MCF 10A (cell line): ENCODE measurements at regions of chr19 and their contacts with region 1.

Region 1: DNA sequence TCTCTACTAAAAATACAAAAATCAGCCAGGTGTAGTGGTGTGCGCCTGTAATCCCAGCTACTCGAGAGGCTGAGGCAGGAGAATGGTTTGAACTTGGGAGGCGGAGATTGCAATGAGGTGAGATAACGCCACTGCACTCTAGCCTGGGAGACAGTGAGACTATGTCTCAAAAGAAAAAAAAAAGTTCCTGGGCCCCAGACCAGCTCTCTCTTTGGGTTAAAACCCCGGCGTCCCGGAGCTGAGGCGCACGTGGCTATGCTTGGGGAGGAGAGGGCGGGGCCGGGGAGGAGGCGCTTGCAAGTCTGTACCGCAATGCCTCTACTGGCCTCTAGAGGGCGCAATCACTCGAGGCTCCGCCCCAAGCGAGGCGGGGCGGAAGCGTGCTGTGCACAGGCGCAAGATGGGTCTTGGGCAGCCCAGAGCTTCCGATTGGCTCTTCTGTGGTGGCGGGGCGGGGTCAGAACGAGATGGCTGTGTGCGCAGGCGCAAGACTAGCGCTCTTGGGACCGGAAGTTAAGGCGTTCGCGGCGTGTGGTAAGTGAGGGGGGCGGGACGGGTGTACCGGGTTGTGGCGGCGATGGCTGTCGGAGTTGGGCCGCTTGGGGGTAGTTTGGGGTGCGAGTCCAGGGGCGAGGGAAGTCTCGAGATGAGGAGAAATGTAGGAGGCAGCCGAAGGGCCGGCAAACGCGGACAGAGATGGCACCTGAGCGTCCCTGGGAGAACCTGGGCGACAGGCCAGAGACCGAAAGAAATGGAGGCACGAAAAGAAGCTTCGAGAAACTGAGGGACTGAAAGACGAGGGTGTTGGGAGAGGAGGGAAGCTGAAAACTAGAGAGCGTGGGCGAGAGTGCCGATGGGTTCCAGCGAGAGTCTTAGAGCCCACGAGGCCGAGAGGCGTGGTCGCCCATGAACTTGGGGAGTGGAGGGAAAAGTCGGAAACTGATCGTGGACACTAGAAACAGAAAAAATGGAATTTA is at the start of gene DHX34:
- DNase-seq: peak; percentile 99
- H3K4me3 Mint-ChIP-seq: peak within 1 kb of the TSS; percentile 94
- H3K27ac Mint-ChIP-seq: peak within 1 kb of the TSS; percentile 91
- H3K4me1 Mint-ChIP-seq: peaks cover 18% of the 10 kb centered on the region
- H3K27me3 Mint-ChIP-seq: no peaks in the 10 kb centered on the region
- CTCF ChIP-seq: peak; percentile 97
- total RNA-seq, gene DHX34: 27.6 and 34.7 TPM in 2 replicates

Region 2: GRCh38 chr19:47296036-47296435 is 53.1 kb before region 1 on chr19:
- CTCF ChIA-PET with region 1: interaction called, 24 read pairs
- POLR2A ChIA-PET with region 1: interaction called, 6 read pairs
- intact Hi-C with region 1: no loop called
- DNase-seq: peak; percentile 93
- H3K4me3 Mint-ChIP-seq: no peak overlapping the region
- H3K27ac Mint-ChIP-seq: no peak overlapping the region
- H3K4me1 Mint-ChIP-seq: no peaks in the 10 kb centered on the region
- H3K27me3 Mint-ChIP-seq: no peaks in the 10 kb centered on the region
- CTCF ChIP-seq: peak; percentile 71

Region 3: GRCh38 chr19:47315125-47315821 is 33.8 kb before region 1 on chr19:
- CTCF ChIA-PET with region 1: interaction called, 22 read pairs
- POLR2A ChIA-PET with region 1: interaction called, 24 read pairs
- intact Hi-C with region 1: no loop called
- DNase-seq: peak; percentile 98
- H3K4me3 Mint-ChIP-seq: peak overlapping the region; percentile 10
- H3K27ac Mint-ChIP-seq: peak overlapping the region; percentile 96
- H3K4me1 Mint-ChIP-seq: peaks cover 32% of the 10 kb centered on the region
- H3K27me3 Mint-ChIP-seq: no peaks in the 10 kb centered on the region
- CTCF ChIP-seq: no peak

Region 4: GRCh38 chr19:47330466-47330869 is 18.6 kb before region 1 on chr19:
- CTCF ChIA-PET with region 1: interaction called, 19 read pairs
- POLR2A ChIA-PET with region 1: interaction called, 21 read pairs
- intact Hi-C with region 1: no loop called
- DNase-seq: no peak
- H3K4me3 Mint-ChIP-seq: no peak overlapping the region
- H3K27ac Mint-ChIP-seq: no peak overlapping the region
- H3K4me1 Mint-ChIP-seq: peaks cover 5% of the 10 kb centered on the region
- H3K27me3 Mint-ChIP-seq: no peaks in the 10 kb centered on the region
- CTCF ChIP-seq: no peak

Region 5: DNA sequence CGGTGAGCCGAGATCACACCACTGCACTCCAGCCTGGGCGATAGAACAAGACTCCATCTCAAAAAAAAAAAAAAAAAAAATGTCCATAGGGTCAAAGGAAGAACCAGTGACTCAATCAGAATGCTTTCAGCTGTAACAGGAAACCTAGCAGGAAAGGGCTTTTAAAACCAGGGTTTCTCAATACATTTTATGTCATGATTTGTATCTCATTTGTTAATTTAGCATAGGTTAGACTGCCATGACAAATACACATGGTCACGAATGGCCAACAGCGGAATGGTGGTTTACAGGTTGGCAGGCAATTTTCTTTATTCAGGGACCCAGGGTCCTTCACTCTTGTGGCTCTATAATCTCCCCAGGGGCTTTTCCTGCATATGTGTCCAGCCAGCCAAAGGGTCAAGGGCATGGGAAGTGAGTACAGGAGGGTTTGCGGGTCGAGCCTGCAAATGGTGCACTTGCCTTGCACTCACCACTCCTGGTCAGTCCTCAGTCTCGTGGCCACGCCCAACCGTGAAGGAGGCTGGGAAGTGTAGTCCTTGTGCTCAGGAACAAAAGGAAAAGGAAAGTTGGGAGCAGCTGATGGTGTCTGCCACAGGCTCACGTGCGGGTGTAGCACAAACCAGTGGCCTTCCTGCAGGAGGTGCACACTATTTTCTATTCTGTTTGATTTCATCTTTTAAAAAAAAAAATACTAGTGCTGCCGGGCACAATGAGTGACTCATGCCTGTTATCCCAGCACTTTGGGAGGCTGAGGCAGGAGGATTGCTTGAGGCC is 14.8 kb after region 1 on chr19:
- CTCF ChIA-PET with region 1: interaction called, 19 read pairs
- POLR2A ChIA-PET with region 1: interaction called, 12 read pairs
- intact Hi-C with region 1: no loop called
- DNase-seq: peak; percentile 81
- H3K4me3 Mint-ChIP-seq: no peak overlapping the region
- H3K27ac Mint-ChIP-seq: no peak overlapping the region
- H3K4me1 Mint-ChIP-seq: peaks cover 7% of the 10 kb centered on the region
- H3K27me3 Mint-ChIP-seq: no peaks in the 10 kb centered on the region
- CTCF ChIP-seq: no peak

Region 6: GRCh38 chr19:47381653-47382279 is 32.7 kb after region 1 on chr19:
- CTCF ChIA-PET with region 1: interaction called, 16 read pairs
- POLR2A ChIA-PET with region 1: interaction called, 3 read pairs
- intact Hi-C with region 1: no loop called
- DNase-seq: no peak
- H3K4me3 Mint-ChIP-seq: no peak overlapping the region
- H3K27ac Mint-ChIP-seq: no peak overlapping the region
- H3K4me1 Mint-ChIP-seq: no peaks in the 10 kb centered on the region
- H3K27me3 Mint-ChIP-seq: no peaks in the 10 kb centered on the region
- CTCF ChIP-seq: no peak

Region 7: DNA sequence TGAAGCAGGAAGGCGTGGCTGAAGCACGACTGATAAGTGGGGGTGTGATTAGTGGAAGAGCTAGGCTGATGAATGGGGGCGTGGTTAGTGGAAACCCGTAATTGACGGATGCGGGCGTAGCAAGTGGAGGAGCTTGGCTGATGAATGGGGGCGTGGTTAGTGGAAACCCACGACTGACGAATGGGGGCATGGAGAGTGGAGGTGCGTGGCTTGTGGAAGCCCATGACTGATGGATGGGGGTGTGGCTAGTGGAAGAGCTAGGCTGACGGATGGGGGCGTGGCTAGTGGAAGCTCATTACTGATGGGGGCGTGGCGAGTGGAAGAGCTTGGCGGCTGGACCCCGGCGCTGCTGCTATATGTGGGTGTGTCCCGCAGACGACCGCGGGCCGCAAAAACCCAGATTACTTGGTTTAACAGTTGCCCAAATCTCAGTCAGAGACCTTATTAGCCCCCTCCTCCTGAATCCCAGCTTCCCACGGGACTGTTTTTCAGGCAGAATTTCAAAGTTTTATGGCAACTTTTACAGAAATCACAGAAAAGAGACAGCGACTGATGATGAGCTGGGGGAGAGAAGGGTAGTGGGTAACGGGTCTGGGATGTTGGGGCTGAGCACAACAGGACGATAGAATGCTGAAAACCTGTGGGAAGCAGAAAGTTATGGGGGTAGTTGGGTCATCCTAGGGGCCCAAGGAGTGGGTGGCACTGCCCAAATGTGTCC is 79.2 kb after region 1 on chr19:
- CTCF ChIA-PET with region 1: interaction called, 10 read pairs
- POLR2A ChIA-PET with region 1: interaction called, 7 read pairs
- intact Hi-C with region 1: no loop called
- DNase-seq: peak; percentile 98
- H3K4me3 Mint-ChIP-seq: no peak overlapping the region
- H3K27ac Mint-ChIP-seq: no peak overlapping the region
- H3K4me1 Mint-ChIP-seq: no peaks in the 10 kb centered on the region
- H3K27me3 Mint-ChIP-seq: peaks cover 7% of the 10 kb centered on the region
- CTCF ChIP-seq: no peak